Naive thymus-derived CD4-positive, alpha-beta T cell (primary cell): ENCODE measurements at regions of chr11 and their contacts with region 1.

Region 1: GRCh38 chr11:121292495-121293287 is at the start of gene SC5D:
- DNase-seq: peak; percentile 94 to 98 (median 96)
- ATAC-seq: peak; percentile 96
- H3K4me3 ChIP-seq: peak within 1 kb of the TSS; percentile 72
- H3K4me3 Mint-ChIP-seq: peak within 1 kb of the TSS; percentile 90 to 100 (median 94)
- H3K27ac ChIP-seq: peak within 1 kb of the TSS; percentile 95
- H3K27ac Mint-ChIP-seq: peak within 1 kb of the TSS; percentile 88 to 100 (median 99)
- H3K4me1 ChIP-seq: peaks cover 6 to 18% of the 10 kb centered on the region in 2 donors
- H3K4me1 Mint-ChIP-seq: peaks cover 35 to 66% (median 58%) of the 10 kb centered on the region in 7 donors
- H3K27me3 ChIP-seq: no peaks in the 10 kb centered on the region
- H3K27me3 Mint-ChIP-seq: peaks cover 0 to 12% (median 0%) of the 10 kb centered on the region in 5 donors
- total RNA-seq, gene SC5D: 21.5 to 48.7 (median 32.8) TPM

Region 2: GRCh38 chr11:121023848-121024751 is 268.6 kb before region 1 on chr11 and contains the start of gene TBCEL:
- CTCF ChIA-PET with region 1: no interaction called
- POLR2A ChIA-PET with region 1: no interaction called
- intact Hi-C with region 1: loop called in 1 of 2 experiments (anchors 2 kb)
- DNase-seq: peak; percentile 74 to 89 (median 87)
- ATAC-seq: peak; percentile 91
- H3K4me3 ChIP-seq: peak within 1 kb of the TSS; percentile 53
- H3K4me3 Mint-ChIP-seq: peak within 1 kb of the TSS; percentile 72 to 92 (median 89)
- H3K27ac ChIP-seq: peak within 1 kb of the TSS; percentile 81
- H3K27ac Mint-ChIP-seq: peak within 1 kb of the TSS; percentile 79 to 95 (median 90)
- H3K4me1 ChIP-seq: peaks cover 7 to 10% of the 10 kb centered on the region in 2 donors
- H3K4me1 Mint-ChIP-seq: peaks cover 20 to 49% (median 32%) of the 10 kb centered on the region in 7 donors
- H3K27me3 ChIP-seq: no peaks in the 10 kb centered on the region
- H3K27me3 Mint-ChIP-seq: peaks cover 4 to 14% (median 6%) of the 10 kb centered on the region in 5 donors
- total RNA-seq, gene TBCEL: 14.7 to 30.0 (median 22.2) TPM

Region 3: GRCh38 chr11:121249039-121249663 is 43.5 kb before region 1 on chr11:
- CTCF ChIA-PET with region 1: interaction called, 7 read pairs
- POLR2A ChIA-PET with region 1: interaction called, 6 read pairs
- intact Hi-C with region 1: loop called in 1 of 2 experiments (anchors 1 kb)
- DNase-seq: peak in 6 of 9 donors; percentile 36 to 56 (median 41)
- ATAC-seq: peak; percentile 75
- H3K4me3 ChIP-seq: no peak overlapping the region
- H3K4me3 Mint-ChIP-seq: peak overlapping the region in 1 of 10 donors; percentile 19
- H3K27ac ChIP-seq: no peak overlapping the region
- H3K27ac Mint-ChIP-seq: peak overlapping the region in 1 of 9 donors; percentile 23
- H3K4me1 ChIP-seq: no peaks in the 10 kb centered on the region
- H3K4me1 Mint-ChIP-seq: peaks cover 0 to 10% (median 3%) of the 10 kb centered on the region in 7 donors
- H3K27me3 ChIP-seq: no peaks in the 10 kb centered on the region
- H3K27me3 Mint-ChIP-seq: peaks cover 0 to 12% (median 5%) of the 10 kb centered on the region in 5 donors

Region 4: GRCh38 chr11:121417055-121417551 is 124.4 kb after region 1 on chr11:
- CTCF ChIA-PET with region 1: no interaction called
- POLR2A ChIA-PET with region 1: interaction called, 4 read pairs
- intact Hi-C with region 1: loop called (anchors 1 to 2 kb)
- DNase-seq: peak; percentile 28 to 55 (median 40)
- ATAC-seq: peak; percentile 59
- H3K4me3 ChIP-seq: peak overlapping the region; percentile 20
- H3K4me3 Mint-ChIP-seq: peak overlapping the region; percentile 25 to 75 (median 62)
- H3K27ac ChIP-seq: peak overlapping the region; percentile 48
- H3K27ac Mint-ChIP-seq: peak overlapping the region; percentile 79 to 96 (median 89)
- H3K4me1 ChIP-seq: peaks cover 36 to 53% of the 10 kb centered on the region in 2 donors
- H3K4me1 Mint-ChIP-seq: peaks cover 47 to 82% (median 70%) of the 10 kb centered on the region in 7 donors
- H3K27me3 ChIP-seq: no peaks in the 10 kb centered on the region
- H3K27me3 Mint-ChIP-seq: no peaks in the 10 kb centered on the region

Region 5: DNA sequence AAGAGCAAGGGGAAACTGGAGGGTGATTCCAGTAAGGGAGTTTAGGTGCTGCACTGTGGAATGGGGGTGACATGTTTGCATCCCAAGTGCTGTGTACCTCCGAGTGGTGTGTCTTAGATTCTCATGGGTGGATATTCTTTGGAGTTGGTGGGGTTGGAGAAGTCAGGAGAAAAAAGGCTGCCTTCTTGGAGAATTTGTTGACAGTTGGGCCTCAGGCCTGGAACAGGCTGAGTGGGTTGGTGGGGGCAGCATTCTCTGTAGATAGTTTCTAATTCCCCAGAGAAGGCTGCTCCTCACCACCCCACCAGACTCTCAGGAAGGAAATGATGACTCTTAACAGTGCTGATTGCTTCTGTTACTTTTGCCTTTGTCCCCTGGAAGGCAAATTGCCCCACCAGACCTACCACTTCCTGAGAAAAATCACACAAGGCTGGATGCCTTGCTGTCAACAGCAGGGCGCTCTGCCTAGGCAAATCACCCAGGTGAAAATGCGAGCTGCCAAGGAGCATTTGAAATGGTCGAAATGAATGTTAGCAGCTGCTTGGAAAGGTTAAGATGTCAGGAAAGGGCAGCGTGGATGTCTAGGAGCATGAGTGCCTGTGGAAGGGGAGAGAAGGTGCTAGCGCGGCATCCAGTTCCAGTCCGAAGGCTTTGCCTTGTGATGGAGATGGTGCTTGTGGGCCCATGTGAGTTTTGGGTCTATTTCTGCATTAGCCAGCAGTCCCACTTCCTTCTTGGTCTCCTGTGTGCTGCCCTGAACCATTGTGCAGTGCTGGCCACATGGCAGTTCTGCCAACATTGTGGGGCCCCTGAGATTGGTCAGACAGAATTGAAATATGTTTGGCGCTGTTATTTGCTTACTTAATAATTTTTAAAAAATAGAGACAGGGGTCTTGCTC is 189.8 kb after region 1 on chr11:
- CTCF ChIA-PET with region 1: no interaction called
- POLR2A ChIA-PET with region 1: no interaction called
- intact Hi-C with region 1: loop called (anchors 1 kb)
- DNase-seq: peak in 8 of 9 donors; percentile 45 to 72 (median 67)
- ATAC-seq: peak; percentile 87
- H3K4me3 ChIP-seq: peak overlapping the region; percentile 30
- H3K4me3 Mint-ChIP-seq: peak overlapping the region; percentile 73 to 89 (median 86)
- H3K27ac ChIP-seq: peak overlapping the region; percentile 61
- H3K27ac Mint-ChIP-seq: peak overlapping the region; percentile 84 to 97 (median 94)
- H3K4me1 ChIP-seq: peaks cover 25 to 44% of the 10 kb centered on the region in 2 donors
- H3K4me1 Mint-ChIP-seq: peaks cover 50 to 90% (median 81%) of the 10 kb centered on the region in 7 donors
- H3K27me3 ChIP-seq: no peaks in the 10 kb centered on the region
- H3K27me3 Mint-ChIP-seq: no peaks in the 10 kb centered on the region

Region 6: GRCh38 chr11:121591405-121592033 is 298.8 kb after region 1 on chr11:
- CTCF ChIA-PET with region 1: no interaction called
- POLR2A ChIA-PET with region 1: no interaction called
- intact Hi-C with region 1: loop called (anchors 1 kb)
- DNase-seq: peak in 8 of 9 donors; percentile 56 to 81 (median 74)
- ATAC-seq: peak; percentile 88
- H3K4me3 ChIP-seq: no peak overlapping the region
- H3K4me3 Mint-ChIP-seq: no peak overlapping the region
- H3K27ac ChIP-seq: no peak overlapping the region
- H3K27ac Mint-ChIP-seq: peak overlapping the region in 7 of 9 donors; percentile 44 to 89 (median 70)
- H3K4me1 ChIP-seq: no peaks in the 10 kb centered on the region
- H3K4me1 Mint-ChIP-seq: peaks cover 9 to 29% (median 14%) of the 10 kb centered on the region in 7 donors
- H3K27me3 ChIP-seq: no peaks in the 10 kb centered on the region
- H3K27me3 Mint-ChIP-seq: no peaks in the 10 kb centered on the region

Region 7: GRCh38 chr11:122749005-122749687 is 1456.5 kb after region 1 on chr11:
- CTCF ChIA-PET with region 1: no interaction called
- POLR2A ChIA-PET with region 1: no interaction called
- intact Hi-C with region 1: loop called in 1 of 2 experiments (anchors 10 kb)
- DNase-seq: peak in 5 of 9 donors; percentile 17 to 51 (median 28)
- ATAC-seq: peak; percentile 81
- H3K4me3 ChIP-seq: no peak overlapping the region
- H3K4me3 Mint-ChIP-seq: peak overlapping the region in 3 of 10 donors; percentile 8 to 45 (median 18)
- H3K27ac ChIP-seq: no peak overlapping the region
- H3K27ac Mint-ChIP-seq: peak overlapping the region in 2 of 9 donors; percentile 48 to 49
- H3K4me1 ChIP-seq: peaks cover 41 to 50% of the 10 kb centered on the region in 2 donors
- H3K4me1 Mint-ChIP-seq: peaks cover 4 to 70% (median 35%) of the 10 kb centered on the region in 7 donors
- H3K27me3 ChIP-seq: no peaks in the 10 kb centered on the region
- H3K27me3 Mint-ChIP-seq: peaks cover 0 to 13% (median 0%) of the 10 kb centered on the region in 5 donors